ENCODE measurements at regions of chr7 and their contacts with region 1.

Region 1: DNA sequence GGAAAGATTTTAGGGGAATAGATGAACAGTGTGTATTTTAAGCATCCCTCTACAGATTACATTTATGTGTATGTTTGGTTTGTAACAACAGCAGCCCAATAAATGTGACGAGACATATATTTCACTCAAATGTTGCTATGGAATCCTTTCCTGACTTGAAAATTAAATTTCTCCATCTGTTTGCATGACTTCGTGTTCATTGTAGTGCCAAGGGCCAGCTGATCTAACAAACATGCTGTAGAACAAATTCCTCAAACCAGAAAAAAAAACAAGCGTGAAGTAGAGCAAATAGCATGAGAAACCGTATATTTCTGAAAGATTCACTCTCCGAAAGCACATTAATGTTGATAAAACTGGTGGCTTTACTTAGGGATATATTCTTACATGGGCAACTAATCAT is 87.8 kb downstream of the NRCAM start:
- DNase-seq: no peak
- ATAC-seq: no peak
- H3K4me3 ChIP-seq: no peak overlapping the region
- H3K27ac ChIP-seq: no peak overlapping the region
- H3K4me1 ChIP-seq: peaks cover 3% of the 10 kb centered on the region; the same call in 1 of the 2 replicates
- H3K27me3 ChIP-seq: peaks cover 14% of the 10 kb centered on the region; the same call in 1 of the 2 replicates
- CTCF ChIP-seq: no peak

Region 2: DNA sequence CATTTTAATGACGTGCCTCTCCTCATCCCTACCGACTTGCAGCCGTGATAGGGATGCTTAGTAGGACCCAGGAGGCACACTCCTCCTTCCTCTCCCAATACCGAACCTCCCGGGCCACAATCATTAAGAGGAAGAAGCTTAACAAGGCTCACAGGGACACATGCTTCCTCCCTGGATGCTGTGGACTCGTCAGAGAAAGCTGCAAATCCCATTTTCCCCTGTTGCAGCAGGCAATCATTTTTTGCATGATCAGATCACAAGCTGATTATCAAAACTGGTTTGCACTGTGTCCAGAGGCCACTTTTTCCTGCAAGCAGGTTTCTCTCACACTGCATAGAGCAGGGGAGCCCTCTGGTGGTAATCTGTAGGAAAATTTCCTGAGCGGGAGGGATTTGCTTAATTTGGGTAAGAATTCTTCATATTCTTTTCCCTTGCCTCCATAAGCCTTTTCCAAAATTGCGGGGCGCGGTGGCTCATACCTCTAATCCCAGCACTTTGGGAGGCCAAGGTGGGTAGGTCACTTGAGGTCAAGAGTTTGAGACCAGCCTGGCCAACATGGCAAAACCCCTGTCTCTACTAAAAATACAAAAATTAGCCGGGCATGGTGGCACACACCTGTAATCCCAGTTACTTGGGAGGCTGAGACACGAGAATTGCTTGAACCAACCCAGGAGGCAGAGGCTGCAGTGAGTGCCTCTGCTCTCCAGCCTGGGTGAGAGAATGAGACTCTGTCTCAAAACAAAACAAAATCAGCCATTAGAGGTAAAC is 222.2 kb before region 1 on chr7:
- CTCF ChIA-PET with region 1: no interaction called
- POLR2A ChIA-PET with region 1: no interaction called
- intact Hi-C with region 1: no loop called
- DNase-seq: peak; percentile 84
- ATAC-seq: peak; percentile 83
- H3K4me3 ChIP-seq: peak overlapping the region; percentile 51
- H3K27ac ChIP-seq: no peak overlapping the region
- H3K4me1 ChIP-seq: no peaks in the 10 kb centered on the region
- H3K27me3 ChIP-seq: peaks cover 22% of the 10 kb centered on the region
- CTCF ChIP-seq: peak; percentile 88

Region 3: DNA sequence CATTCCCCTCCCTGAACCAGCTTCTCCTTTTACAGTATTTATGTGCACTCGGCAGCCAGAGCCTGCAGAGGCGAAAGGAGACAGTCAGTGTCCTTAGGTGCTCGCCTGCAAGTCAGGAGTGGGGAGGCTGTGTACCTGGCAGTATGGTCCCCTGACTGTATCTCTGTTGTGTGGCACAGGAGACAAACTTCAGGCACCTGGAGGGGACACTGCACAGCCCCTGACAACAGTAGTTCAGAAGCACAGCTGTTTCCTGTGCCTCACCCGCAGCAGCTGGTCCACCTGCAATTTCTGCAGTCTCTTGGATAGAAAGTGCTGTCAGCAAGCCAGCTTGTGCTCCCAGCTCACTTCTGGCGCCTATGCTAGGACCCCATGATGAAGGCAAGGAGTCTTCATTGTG is 164.9 kb before region 1 on chr7:
- CTCF ChIA-PET with region 1: no interaction called
- POLR2A ChIA-PET with region 1: interaction called, 11 read pairs
- intact Hi-C with region 1: no loop called
- DNase-seq: no peak
- ATAC-seq: no peak
- H3K4me3 ChIP-seq: no peak overlapping the region
- H3K27ac ChIP-seq: no peak overlapping the region
- H3K4me1 ChIP-seq: no peaks in the 10 kb centered on the region
- H3K27me3 ChIP-seq: 0 out of 2 replicates have a peak, but pooled peaks cover 4% of the 10 kb centered on the region
- CTCF ChIP-seq: no peak

Region 4: DNA sequence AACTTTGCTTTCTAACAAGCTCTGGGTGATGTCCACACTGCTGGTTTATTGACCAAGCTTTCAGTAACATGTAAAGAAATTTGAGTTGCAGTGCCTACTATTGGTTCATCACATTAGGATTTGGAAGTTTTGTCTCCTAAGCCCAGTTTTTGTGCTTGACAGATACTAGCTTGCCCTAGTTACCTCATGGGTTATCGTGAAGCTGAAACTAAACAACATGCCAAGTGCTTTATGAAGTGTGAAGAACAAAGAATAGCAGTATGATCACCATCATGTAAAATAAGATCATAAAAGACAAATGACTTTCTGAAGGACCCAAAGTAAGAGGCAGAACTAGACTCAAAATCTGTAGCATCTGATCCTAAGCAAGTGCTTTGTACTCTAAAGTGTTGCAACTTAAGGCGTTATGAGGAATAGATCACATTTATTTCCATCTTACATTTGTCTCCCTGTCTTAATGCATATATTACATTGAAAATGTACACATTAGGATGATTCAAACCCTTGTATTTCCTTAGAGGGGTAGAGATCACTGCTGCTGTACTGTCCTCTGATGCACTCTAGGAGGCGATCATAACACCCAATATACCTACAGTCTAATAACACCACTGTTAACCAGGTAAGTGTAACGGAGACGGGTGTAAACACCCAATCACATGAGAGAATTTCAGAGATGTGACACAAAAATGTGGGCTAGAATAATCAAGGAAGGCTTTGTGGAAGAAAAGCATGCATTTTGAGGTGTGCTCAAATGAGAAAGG is 16.4 kb after region 1 on chr7:
- CTCF ChIA-PET with region 1: no interaction called
- POLR2A ChIA-PET with region 1: interaction called, 16 read pairs
- intact Hi-C with region 1: no loop called
- DNase-seq: peak; percentile 16
- ATAC-seq: no peak
- H3K4me3 ChIP-seq: no peak overlapping the region
- H3K27ac ChIP-seq: no peak overlapping the region
- H3K4me1 ChIP-seq: no peaks in the 10 kb centered on the region
- H3K27me3 ChIP-seq: peaks cover 23% of the 10 kb centered on the region
- CTCF ChIP-seq: peak; percentile 53

Measured in PC-3 (cell line).